Prostate gland (tissue), 2 donors: ENCODE measurements at regions of chr9 and their contacts with region 1.

Region 1: GRCh38 chr9:4984621-4985385 is at the start of gene JAK2:
- DNase-seq: peak; percentile 89
- H3K4me3 ChIP-seq: peak within 1 kb of the TSS; percentile 84 to 95
- H3K27ac ChIP-seq: peak within 1 kb of the TSS; percentile 96 to 97
- H3K4me1 ChIP-seq: peaks cover 10% of the 10 kb centered on the region
- H3K27me3 ChIP-seq: no peaks in the 10 kb centered on the region
- CTCF ChIP-seq: peak in 2 of 4 experiments; percentile 6 to 41
- POLR2A ChIP-seq: peak; percentile 63
- total RNA-seq, gene JAK2: 8.6 to 13.9 TPM

Region 2: GRCh38 chr9:4662108-4662988 is 322.5 kb before region 1 on chr9 and contains the start of gene PLPP6:
- intact Hi-C with region 1: loop called (anchors 10 kb)
- DNase-seq: peak; percentile 92
- H3K4me3 ChIP-seq: peak within 1 kb of the TSS; percentile 77 to 90
- H3K27ac ChIP-seq: peak within 1 kb of the TSS; percentile 90 to 91
- H3K4me1 ChIP-seq: peaks cover 8% of the 10 kb centered on the region
- H3K27me3 ChIP-seq: no peaks in the 10 kb centered on the region
- CTCF ChIP-seq: peak; percentile 51 to 80 (median 72)
- POLR2A ChIP-seq: peak; percentile 65
- total RNA-seq, gene PLPP6: 15.6 to 32.5 TPM

Region 3: DNA sequence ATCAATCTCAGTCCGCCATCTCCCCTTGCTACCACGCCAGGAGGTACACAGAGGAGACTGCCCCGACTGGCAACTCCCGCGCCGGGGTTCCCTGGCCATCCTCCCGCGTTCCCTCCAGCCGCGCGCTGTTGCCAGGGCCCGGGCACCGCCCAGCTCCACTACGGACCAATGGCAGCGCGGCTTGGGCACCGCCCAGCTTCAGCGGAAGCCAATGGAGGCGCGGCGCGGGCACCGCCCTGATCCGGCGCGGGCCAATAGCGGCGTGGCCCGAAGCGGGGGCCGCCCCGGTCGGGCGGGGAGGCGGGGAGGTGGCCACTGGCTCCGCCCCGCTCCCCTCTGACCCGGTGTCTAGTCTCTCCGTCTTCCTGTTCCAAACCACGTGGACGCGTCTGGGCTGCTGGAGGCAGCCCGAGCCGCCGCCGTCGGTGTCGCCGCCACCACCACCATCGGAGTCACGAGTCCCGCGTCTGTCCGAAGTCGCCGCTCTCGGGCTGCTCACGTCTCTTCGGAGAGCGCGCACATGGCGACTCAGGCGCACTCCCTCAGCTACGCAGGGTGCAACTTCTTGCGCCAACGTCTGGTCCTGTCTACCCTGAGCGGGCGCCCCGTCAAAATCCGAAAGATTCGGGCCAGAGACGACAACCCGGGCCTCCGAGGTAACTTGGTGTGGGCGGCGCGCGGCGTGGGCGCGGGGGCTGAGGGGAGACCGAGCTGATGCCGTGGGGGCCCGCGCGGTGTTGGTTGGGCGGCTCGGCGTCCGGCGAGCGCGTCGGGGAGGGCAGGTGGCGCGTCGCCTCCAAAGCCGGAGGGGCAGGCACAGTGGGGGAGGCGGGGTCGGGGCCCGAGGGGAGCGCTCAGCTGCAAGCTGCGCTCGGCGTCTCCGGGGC is 192.0 kb before region 1 on chr9 and contains the start of gene RCL1:
- intact Hi-C with region 1: loop called (anchors 2 kb)
- DNase-seq: peak; percentile 95
- H3K4me3 ChIP-seq: peak within 1 kb of the TSS; percentile 67 to 91
- H3K27ac ChIP-seq: peak within 1 kb of the TSS; percentile 42 to 72
- H3K4me1 ChIP-seq: no peaks in the 10 kb centered on the region
- H3K27me3 ChIP-seq: no peaks in the 10 kb centered on the region
- CTCF ChIP-seq: no peak
- POLR2A ChIP-seq: peak; percentile 72
- total RNA-seq, gene RCL1: 18.9 to 29.3 TPM

Region 4: GRCh38 chr9:4933177-4933576 is 51.6 kb before region 1 on chr9:
- intact Hi-C with region 1: loop called (anchors 5 kb)
- DNase-seq: peak; percentile 75
- H3K4me3 ChIP-seq: no peak overlapping the region
- H3K27ac ChIP-seq: peak overlapping the region; percentile 53 to 62
- H3K4me1 ChIP-seq: peaks cover 4% of the 10 kb centered on the region
- H3K27me3 ChIP-seq: no peaks in the 10 kb centered on the region
- CTCF ChIP-seq: peak in 1 of 4 experiments; percentile 1
- POLR2A ChIP-seq: no peak

Region 5: GRCh38 chr9:5608298-5609225 is 623.8 kb after region 1 on chr9:
- intact Hi-C with region 1: loop called (anchors 10 kb)
- DNase-seq: no peak
- H3K4me3 ChIP-seq: peak overlapping the region; percentile 16 to 21
- H3K27ac ChIP-seq: peak overlapping the region; percentile 21 to 67
- H3K4me1 ChIP-seq: no peaks in the 10 kb centered on the region
- H3K27me3 ChIP-seq: no peaks in the 10 kb centered on the region
- CTCF ChIP-seq: peak in 1 of 4 experiments; percentile 7
- POLR2A ChIP-seq: no peak